ENCODE measurements at regions of chr3 and their contacts with region 1.

Region 1: DNA sequence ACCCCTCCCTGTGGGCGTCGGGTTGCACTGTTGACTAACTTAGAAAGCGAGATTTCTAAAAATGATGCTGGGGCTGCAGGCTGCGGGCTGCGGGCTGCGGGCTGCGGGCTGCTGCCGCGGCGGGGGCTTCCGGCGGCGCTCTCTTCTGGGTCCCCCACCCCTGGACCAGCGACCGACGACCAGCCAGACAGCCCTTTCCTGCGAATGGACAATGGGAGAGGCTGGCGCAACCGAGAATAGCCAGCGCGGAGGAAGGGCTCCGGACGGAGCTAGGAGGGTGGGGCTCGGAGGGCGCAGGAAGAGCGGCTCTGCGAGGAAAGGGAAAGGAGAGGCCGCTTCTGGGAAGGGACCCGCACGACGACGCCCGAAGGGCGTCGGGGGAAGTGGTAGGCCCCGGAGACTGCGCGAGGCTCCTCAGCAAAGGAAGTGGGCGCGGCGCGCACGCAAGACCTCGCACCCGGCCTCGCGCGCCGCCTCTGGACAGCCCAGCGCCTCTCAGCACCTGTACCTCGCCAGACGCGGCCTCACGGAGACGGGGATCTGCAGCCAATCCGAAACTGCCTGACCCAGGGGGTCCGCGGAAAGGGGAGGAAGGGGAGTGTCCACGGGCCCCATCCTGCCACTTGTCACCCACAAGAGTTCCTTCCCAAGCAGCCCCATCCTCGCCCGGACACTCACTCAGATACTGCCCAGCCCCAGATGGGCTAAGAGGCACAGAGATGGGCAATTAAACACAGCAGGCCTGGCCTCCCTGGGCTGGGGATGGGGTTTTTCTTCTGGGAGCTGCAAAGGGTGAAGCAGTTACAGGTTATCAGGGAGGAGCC is 70.7 kb downstream of the SLC12A8 start:
- DNase-seq: peak; percentile 84
- H3K4me3 Mint-ChIP-seq: peak overlapping the region; percentile 60
- H3K27ac Mint-ChIP-seq: peak overlapping the region; percentile 83
- H3K4me1 Mint-ChIP-seq: peaks cover 41% of the 10 kb centered on the region
- H3K27me3 Mint-ChIP-seq: peaks cover 68% of the 10 kb centered on the region

Region 2: DNA sequence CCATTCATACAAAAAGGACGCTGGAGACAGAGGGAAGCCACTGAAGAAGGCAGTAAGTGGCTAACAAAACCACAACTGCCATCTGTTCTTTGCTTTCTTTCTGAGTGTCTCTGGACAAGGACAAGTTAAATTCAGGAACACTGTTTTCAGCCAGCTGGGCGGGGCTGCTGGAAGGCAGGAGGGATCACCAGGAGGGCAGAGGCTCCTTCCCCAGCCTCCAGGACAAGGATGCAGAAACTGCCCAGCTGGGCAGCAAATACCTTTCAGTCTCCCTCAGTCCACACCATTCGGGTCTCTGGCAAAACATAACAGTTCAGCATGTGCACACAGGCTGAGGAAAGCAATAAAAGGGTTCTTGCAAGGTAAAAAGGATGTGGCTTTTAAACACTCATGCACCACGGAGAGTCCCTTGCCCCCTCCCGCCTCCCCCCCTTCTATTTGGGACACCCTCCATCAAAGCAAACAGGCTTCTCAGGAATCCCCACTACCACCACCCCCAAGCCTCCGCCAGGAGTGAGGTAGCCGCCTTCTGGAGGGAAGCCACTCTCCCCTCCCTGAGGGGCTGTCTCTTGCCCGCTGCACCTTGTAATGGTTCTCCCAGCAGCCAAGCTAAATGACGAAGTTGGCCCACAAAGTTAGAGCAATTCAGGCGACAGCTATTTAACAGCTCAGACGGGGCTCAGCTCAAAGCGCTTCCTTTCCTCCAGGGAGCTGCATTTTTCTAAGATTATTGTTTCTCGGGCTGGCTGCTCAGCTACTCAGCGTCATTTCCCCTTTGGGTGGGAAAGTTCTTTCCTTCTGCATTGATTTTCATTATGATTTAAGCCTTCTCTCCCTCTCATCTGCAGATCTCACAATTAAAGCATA is 89.9 kb before region 1 on chr3:
- CTCF ChIA-PET with region 1: no interaction called
- POLR2A ChIA-PET with region 1: interaction called, 12 read pairs
- DNase-seq: peak; percentile 61
- H3K4me3 Mint-ChIP-seq: peak overlapping the region; percentile 50
- H3K27ac Mint-ChIP-seq: peak overlapping the region; percentile 73
- H3K4me1 Mint-ChIP-seq: peaks cover 54% of the 10 kb centered on the region
- H3K27me3 Mint-ChIP-seq: peaks cover 17% of the 10 kb centered on the region

Region 3: GRCh38 chr3:125129512-125129962 is 12.3 kb before region 1 on chr3:
- CTCF ChIA-PET with region 1: interaction called, 3 read pairs
- POLR2A ChIA-PET with region 1: interaction called, 12 read pairs
- DNase-seq: no peak
- H3K4me3 Mint-ChIP-seq: no peak overlapping the region
- H3K27ac Mint-ChIP-seq: no peak overlapping the region
- H3K4me1 Mint-ChIP-seq: peaks cover 39% of the 10 kb centered on the region
- H3K27me3 Mint-ChIP-seq: peaks cover 34% of the 10 kb centered on the region

Region 4: DNA sequence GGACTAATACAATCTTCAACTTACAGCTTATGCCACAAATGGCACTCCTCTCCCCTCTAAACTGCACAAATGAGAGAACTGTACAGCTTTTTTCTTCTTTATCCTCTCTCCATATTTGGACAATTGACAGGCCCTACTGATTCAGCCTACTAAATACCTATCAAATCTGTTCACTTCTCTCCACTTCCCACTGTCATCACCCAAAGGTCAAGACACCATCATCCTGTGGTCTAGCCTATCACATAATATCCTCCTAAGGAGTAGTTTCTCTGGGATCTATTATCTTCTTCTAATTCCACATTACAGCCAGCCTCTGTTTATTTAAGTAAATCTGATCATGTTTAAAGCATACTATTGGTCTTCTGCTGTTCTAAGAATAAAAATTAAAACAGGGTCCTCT is 103.7 kb after region 1 on chr3:
- CTCF ChIA-PET with region 1: no interaction called
- POLR2A ChIA-PET with region 1: no interaction called
- DNase-seq: no peak
- H3K4me3 Mint-ChIP-seq: no peak overlapping the region
- H3K27ac Mint-ChIP-seq: no peak overlapping the region
- H3K4me1 Mint-ChIP-seq: peaks cover 2% of the 10 kb centered on the region
- H3K27me3 Mint-ChIP-seq: no peaks in the 10 kb centered on the region

Region 5: DNA sequence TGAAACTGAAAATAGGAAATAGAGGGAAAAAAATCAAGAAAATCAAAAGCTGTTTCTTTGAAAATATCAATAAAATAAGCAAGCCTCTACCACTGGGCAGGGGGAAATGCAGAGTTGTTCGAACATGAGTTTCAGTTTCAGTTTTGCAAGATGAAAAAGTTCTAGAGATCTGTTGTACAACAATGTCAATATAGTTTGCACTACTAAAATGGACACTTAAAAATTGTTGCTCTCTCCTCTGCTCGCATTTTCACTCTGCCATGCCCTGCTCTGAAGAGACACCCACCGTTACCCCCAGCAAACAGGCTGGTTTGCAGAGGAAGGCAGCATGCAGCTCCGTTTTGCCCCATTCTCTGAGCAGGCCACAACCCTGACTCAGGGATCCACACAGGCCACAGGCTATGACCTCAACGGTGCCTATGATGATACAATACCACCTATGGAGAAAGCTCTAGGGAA is 168.8 kb after region 1 on chr3:
- CTCF ChIA-PET with region 1: no interaction called
- POLR2A ChIA-PET with region 1: no interaction called
- DNase-seq: peak; percentile 68
- H3K4me3 Mint-ChIP-seq: peak overlapping the region; percentile 82
- H3K27ac Mint-ChIP-seq: peak overlapping the region; percentile 85
- H3K4me1 Mint-ChIP-seq: peaks cover 21% of the 10 kb centered on the region
- H3K27me3 Mint-ChIP-seq: no peaks in the 10 kb centered on the region

Measured in activated CD4-positive, alpha-beta memory T cell treated with anti-CD3 and anti-CD28 coated beads, Interleukin-2, amount 10 ng/mL, durations not matched to agents 7 days and 5 days (primary cell).